ENCODE measurements at regions of chr1 and their contacts with region 1.

Region 1: GRCh38 chr1:172532700-172533509 is at the start of gene SUCO:
- DNase-seq: peak; percentile 99 to 100 (median 100)
- ATAC-seq: peak; percentile 96 to 98 (median 98)
- H3K4me3 ChIP-seq: peak within 1 kb of the TSS; percentile 58 to 93 (median 80)
- H3K27ac ChIP-seq: peak within 1 kb of the TSS; percentile 88 to 99 (median 96)
- H3K4me1 ChIP-seq: peaks cover 0 to 48% (median 29%) of the 10 kb centered on the region in 12 donors
- H3K27me3 ChIP-seq: no peaks in the 10 kb centered on the region
- CTCF ChIP-seq: peak in 4 of 12 donors; percentile 6 to 27 (median 7)
- POLR2A ChIP-seq: peak; percentile 77 to 97
- total RNA-seq, gene SUCO: 12.8 to 33.4 (median 27.3) TPM

Region 2: GRCh38 chr1:171654942-171655745 is 877.8 kb before region 1 on chr1:
- intact Hi-C with region 1: loop called in 1 of 10 experiments (anchors 5 kb)
- DNase-seq: peak; percentile 85 to 91 (median 86)
- ATAC-seq: peak; percentile 84 to 92 (median 88)
- H3K4me3 ChIP-seq: peak overlapping the region in 10 of 12 donors; percentile 10 to 35 (median 21)
- H3K27ac ChIP-seq: peak overlapping the region; percentile 45 to 95 (median 79)
- H3K4me1 ChIP-seq: peaks cover 2 to 53% (median 31%) of the 10 kb centered on the region in 12 donors
- H3K27me3 ChIP-seq: no peaks in the 10 kb centered on the region
- CTCF ChIP-seq: peak; percentile 49 to 84 (median 77)
- POLR2A ChIP-seq: no peak

Region 3: DNA sequence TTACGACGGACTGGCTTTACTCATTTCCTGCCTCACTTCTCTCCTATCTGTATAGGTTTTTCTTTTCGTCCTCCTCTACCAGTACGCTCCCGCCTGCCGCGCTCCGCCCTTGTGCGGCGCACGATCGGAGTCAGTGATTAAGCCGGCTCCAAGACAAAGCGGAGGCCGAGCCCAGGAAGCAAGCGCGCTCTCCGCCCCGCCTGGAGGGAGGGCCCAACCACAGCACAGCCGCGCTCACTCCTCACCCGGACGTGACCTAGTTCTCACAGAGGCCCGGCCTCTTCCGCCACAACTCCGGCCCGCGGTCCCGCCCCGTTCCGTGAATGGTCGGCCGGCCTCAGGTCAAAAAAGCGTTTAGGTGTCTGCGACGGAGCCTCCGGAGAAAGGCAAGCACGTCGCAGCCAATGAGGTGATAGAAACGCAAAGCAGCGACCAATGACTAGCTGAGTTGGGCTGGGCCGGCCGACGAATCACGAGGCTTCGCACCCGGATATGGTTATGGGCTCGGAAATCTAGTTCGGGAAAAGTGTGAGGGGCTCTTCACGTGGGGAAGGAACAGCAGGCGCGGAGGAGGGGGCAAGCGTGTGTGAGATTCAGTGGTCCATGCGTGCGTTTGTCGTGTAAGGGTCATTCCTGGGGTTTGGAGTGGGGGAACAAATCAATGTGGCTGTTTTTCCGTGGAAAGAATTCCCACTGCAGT is 751.6 kb before region 1 on chr1 and contains the start of gene METTL13:
- intact Hi-C with region 1: loop called in 1 of 10 experiments (anchors 2 kb)
- DNase-seq: peak; percentile 98 to 99 (median 99)
- ATAC-seq: peak; percentile 100
- H3K4me3 ChIP-seq: peak within 1 kb of the TSS; percentile 46 to 91 (median 75)
- H3K27ac ChIP-seq: peak within 1 kb of the TSS; percentile 54 to 93 (median 90)
- H3K4me1 ChIP-seq: peaks cover 0 to 31% (median 18%) of the 10 kb centered on the region in 12 donors
- H3K27me3 ChIP-seq: no peaks in the 10 kb centered on the region
- CTCF ChIP-seq: peak in 1 of 12 donors; percentile 12
- POLR2A ChIP-seq: peak; percentile 73 to 97
- total RNA-seq, gene METTL13: 13.1 to 24.1 (median 14.8) TPM

Region 4: GRCh38 chr1:172357753-172358385 is 175.0 kb before region 1 on chr1:
- intact Hi-C with region 1: no loop called
- DNase-seq: no peak
- ATAC-seq: peak in 2 of 4 donors; percentile 5 to 26
- H3K4me3 ChIP-seq: peak overlapping the region in 7 of 12 donors; percentile 0 to 37 (median 12)
- H3K27ac ChIP-seq: peak overlapping the region; percentile 42 to 91 (median 76)
- H3K4me1 ChIP-seq: peaks cover 6 to 63% (median 39%) of the 10 kb centered on the region in 12 donors
- H3K27me3 ChIP-seq: no peaks in the 10 kb centered on the region
- CTCF ChIP-seq: no peak
- POLR2A ChIP-seq: no peak

Region 5: GRCh38 chr1:172449585-172450534 is 83.0 kb before region 1 on chr1:
- intact Hi-C with region 1: loop called in 8 of 10 experiments (anchors 2 to 10 kb)
- DNase-seq: peak; percentile 37 to 73 (median 54)
- ATAC-seq: peak; percentile 74 to 90 (median 90)
- H3K4me3 ChIP-seq: peak overlapping the region in 4 of 12 donors; percentile 6 to 41 (median 14)
- H3K27ac ChIP-seq: peak overlapping the region in 2 of 12 donors; percentile 7 to 28
- H3K4me1 ChIP-seq: peaks cover 0 to 25% (median 6%) of the 10 kb centered on the region in 12 donors
- H3K27me3 ChIP-seq: no peaks in the 10 kb centered on the region
- CTCF ChIP-seq: peak; percentile 71 to 92 (median 86)
- POLR2A ChIP-seq: no peak

Region 6: DNA sequence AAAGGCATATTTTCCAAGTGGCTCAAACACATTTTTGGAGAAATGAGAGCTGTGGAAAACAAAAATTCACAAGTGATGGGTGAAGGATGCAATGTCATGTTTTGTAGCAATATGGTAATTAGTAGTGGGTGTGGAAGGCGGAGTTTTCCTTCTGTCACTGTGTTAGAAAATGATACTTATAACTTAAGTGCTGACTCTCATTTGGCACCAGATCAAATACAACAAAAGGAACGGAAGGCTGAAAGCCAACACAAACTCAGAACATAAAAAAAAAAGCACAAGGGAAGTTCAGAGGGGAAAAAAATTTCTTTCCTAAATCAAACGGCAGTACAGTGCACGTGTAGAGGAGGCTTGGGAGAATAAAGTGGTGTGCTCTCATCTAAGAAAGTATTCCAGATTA is 518.0 kb after region 1 on chr1 and contains the start of gene TNFSF18:
- intact Hi-C with region 1: no loop called
- DNase-seq: peak in 1 of 5 donors; percentile 26
- ATAC-seq: peak; percentile 42 to 82 (median 62)
- H3K4me3 ChIP-seq: no peak within 1 kb of the TSS
- H3K27ac ChIP-seq: no peak within 1 kb of the TSS
- H3K4me1 ChIP-seq: peaks cover 0 to 45% (median 7%) of the 10 kb centered on the region in 12 donors
- H3K27me3 ChIP-seq: no peaks in the 10 kb centered on the region
- CTCF ChIP-seq: no peak
- POLR2A ChIP-seq: no peak
- total RNA-seq, gene TNFSF18: 0.09 to 0.29 (median 0.11) TPM in 3 of 9 donors, not detected in the others